Stomach (tissue), 19 donors: ENCODE measurements at regions of chr17 and their contacts with region 1.

Region 1: DNA sequence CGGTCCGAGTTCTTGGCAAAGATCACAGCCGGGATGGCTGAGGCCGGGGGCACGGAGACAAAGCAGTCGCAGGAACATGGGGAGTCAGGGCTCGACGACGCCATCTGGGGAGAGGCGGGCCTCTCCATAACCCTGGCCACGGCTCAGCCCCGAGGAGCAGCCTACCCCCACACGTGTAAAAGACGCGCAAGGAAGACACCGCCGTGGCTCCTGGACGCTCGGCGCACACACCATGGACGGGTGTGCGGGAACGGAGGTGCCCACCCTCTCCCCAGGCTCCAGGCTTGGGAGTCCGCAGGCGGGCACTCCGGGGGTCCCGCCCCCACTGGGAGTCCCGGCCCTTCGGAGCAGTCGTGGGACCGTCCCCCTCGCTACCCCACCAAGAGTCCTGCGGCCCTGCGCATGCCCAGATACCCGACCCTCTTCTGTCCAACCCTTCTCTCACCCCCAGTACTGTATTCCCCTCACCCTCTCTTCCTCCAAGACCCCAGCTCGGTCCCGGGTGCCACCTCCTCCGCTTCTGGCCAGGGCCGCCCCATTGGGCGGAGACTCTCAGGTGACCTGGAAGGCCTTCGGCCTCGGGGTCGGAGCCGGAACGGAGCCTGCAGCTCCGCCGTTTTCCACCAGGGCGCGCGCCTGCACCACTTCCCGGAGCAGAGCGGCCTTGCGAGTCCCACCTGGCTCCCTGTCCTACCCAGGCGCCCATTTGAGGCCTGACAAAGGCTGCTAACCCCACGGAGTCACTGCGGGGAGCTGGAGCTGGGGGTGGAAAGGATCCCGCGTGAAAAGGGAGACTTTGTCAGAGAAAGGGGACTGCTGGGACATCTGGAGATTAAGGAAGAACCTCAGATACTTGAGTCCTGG is at the start of gene SCRN2:
- DNase-seq: peak; percentile 93 to 96
- H3K4me3 ChIP-seq: peak within 1 kb of the TSS; percentile 62 to 86 (median 84)
- H3K27ac ChIP-seq: peak within 1 kb of the TSS; percentile 68 to 85 (median 74)
- H3K4me1 ChIP-seq: peaks cover 22 to 43% (median 38%) of the 10 kb centered on the region in 4 donors
- H3K27me3 ChIP-seq: peaks cover 0 to 17% (median 12%) of the 10 kb centered on the region in 3 donors
- CTCF ChIP-seq: peak in 6 of 7 experiments; percentile 95 to 99 (median 98)
- EP300 ChIP-seq: no peak
- POLR2A ChIP-seq: no peak
- total RNA-seq, gene SCRN2: 7.0 to 44.9 (median 22.2) TPM

Region 2: GRCh38 chr17:47225436-47225858 is 615.5 kb before region 1 on chr17:
- intact Hi-C with region 1: no loop called
- DNase-seq: peak; percentile 82 to 85
- H3K4me3 ChIP-seq: no peak overlapping the region
- H3K27ac ChIP-seq: peak overlapping the region; percentile 79 to 91 (median 81)
- H3K4me1 ChIP-seq: peaks cover 34 to 56% (median 47%) of the 10 kb centered on the region in 4 donors
- H3K27me3 ChIP-seq: no peaks in the 10 kb centered on the region
- CTCF ChIP-seq: no peak
- EP300 ChIP-seq: no peak
- POLR2A ChIP-seq: no peak

Region 3: DNA sequence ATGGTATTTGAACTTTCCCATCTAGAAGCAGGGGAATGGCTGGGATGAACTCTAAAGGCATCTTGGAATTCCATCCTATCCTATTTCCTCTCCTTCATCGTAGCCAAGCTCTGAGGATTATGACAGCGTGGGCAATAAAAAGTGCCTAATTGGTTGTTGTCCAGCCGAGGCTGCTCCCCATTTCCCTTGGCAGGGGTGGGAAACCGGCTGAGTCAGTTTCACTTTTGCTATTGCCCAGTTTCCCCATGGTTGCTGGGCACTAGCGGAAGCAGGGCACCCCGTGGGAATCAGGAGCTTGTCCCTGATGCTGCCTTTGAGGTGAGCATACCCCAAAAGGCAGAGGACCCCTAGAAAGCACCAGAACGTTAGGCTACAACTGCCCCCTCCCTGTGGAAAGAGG is 41.3 kb after region 1 on chr17:
- intact Hi-C with region 1: loop called (anchors 5 kb)
- DNase-seq: peak; percentile 46 to 59
- H3K4me3 ChIP-seq: peak overlapping the region in 2 of 4 donors; percentile 20 to 27
- H3K27ac ChIP-seq: peak overlapping the region in 2 of 5 donors; percentile 1 to 33
- H3K4me1 ChIP-seq: peaks cover 0 to 34% (median 5%) of the 10 kb centered on the region in 4 donors
- H3K27me3 ChIP-seq: peaks cover 0 to 45% (median 9%) of the 10 kb centered on the region in 3 donors
- CTCF ChIP-seq: no peak
- EP300 ChIP-seq: no peak
- POLR2A ChIP-seq: no peak

Region 4: DNA sequence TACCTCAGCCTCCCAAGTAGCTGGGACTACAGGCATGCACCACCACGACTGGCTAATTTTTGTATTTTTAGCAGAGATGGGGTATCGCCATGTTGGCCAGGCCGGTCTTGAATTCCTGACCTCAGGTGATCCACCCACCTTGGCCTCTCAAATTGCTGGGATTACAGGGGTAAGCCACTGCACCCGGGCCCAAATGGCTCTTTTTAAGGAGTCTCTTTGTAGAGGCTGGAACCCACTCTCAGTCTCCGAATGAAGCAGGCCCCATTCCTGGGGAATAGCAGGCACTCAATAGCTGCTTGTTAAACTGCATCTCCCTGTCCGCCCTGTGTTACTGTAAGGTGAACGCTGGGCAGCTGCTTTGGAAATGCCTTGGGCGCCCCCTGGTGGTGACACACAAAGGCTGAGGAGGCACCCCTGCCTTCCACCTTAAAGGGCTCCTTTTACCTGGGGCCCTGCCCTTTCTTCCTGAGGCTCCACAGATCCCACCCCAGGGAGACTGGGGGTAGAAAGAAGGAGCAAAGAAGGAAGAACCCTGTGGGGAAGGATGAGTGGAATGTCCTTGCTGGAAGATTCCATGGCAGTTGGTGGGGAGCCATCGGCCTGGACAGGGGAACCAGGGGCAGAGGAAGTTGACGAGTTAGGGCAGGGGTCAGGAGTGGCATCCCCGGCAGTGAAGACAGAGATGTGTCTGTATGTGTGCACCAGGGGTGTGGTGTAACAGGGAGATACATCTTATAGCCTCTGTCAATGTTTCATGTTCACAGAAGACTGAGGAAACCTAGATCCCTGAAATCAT is 49.0 kb after region 1 on chr17:
- intact Hi-C with region 1: loop called (anchors 2 kb)
- DNase-seq: peak; percentile 95
- H3K4me3 ChIP-seq: no peak overlapping the region
- H3K27ac ChIP-seq: no peak overlapping the region
- H3K4me1 ChIP-seq: peaks cover 0 to 22% (median 13%) of the 10 kb centered on the region in 4 donors
- H3K27me3 ChIP-seq: no peaks in the 10 kb centered on the region
- CTCF ChIP-seq: peak in 6 of 7 experiments; percentile 44 to 99 (median 91)
- EP300 ChIP-seq: no peak
- POLR2A ChIP-seq: no peak